ENCODE measurements at regions of chr2 and their contacts with region 1.

Region 1: GRCh38 chr2:230987137-230988020 is 8.5 kb upstream of the SPATA3 start:
- DNase-seq: peak; percentile 78
- H3K4me3 Mint-ChIP-seq: peak overlapping the region; percentile 42
- H3K27ac Mint-ChIP-seq: no peak overlapping the region
- H3K4me1 Mint-ChIP-seq: peaks cover 39% of the 10 kb centered on the region
- H3K27me3 Mint-ChIP-seq: peaks cover 39% of the 10 kb centered on the region

Region 2: DNA sequence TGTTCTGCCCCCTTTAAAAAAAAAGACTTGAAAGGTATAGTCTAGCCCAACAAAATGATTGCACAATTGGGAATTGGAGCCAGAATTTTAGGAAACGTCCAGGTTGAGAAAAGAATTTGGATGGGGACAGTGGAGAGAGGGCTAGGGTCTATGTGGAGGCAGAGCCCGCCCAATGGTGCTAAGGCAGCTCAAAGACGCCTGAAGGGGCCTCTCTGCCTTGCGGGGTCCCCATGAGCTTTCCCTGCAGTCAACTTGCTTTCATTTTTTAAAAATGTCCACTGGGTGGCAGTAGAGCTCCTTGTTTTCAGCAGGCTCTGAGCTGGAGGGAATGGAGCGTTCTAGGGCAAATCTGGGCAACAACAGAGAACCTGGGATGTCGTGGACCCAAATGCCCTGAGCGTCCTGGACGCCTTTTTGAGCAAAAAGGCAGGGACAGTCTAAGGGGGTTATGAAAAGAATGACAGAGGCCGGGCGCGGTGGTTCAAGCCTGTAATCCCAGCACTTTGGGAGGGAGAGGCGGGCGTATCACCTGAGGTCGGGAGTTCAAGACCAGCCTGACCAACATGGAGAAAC is 162.9 kb before region 1 on chr2:
- CTCF ChIA-PET with region 1: interaction called, 51 read pairs
- POLR2A ChIA-PET with region 1: interaction called, 11 read pairs
- DNase-seq: peak; percentile 55
- H3K4me3 Mint-ChIP-seq: peak overlapping the region; percentile 21
- H3K27ac Mint-ChIP-seq: no peak overlapping the region
- H3K4me1 Mint-ChIP-seq: peaks cover 20% of the 10 kb centered on the region
- H3K27me3 Mint-ChIP-seq: peaks cover 33% of the 10 kb centered on the region

Region 3: DNA sequence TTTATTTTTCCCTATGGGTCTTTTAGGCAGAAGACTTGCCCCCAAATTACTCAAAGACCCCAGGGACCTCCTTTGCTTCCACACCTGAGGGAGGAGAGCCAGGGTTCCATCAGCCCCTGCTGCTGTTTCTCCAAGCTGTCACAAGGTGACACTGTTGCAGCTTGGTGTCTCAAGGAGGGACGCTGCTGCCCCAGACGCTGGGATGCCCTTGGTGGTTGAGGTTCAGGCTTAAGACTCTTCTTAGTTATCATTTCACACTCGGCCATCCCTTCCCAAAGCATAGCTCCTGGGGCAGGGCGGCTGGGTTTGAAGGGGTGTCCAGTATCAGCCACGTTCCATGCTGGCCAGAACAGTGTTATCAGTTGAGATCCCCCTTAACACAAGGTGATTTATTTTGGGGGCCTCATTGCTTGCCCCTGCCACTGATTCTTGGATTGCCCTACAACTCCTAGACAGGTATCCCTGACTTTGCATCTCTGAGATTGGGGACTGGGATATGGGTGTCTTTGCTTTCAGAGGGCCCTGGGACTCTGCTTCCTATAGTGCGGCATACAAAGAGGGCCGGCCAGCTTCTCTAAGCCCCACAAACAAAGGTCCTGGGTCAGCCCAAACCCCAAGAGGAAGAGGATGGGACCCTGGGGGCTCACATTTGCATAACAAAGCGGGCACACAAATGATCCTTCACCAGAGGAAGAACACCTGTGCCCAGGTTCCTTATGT is 85.0 kb before region 1 on chr2:
- CTCF ChIA-PET with region 1: interaction called, 230 read pairs
- POLR2A ChIA-PET with region 1: interaction called, 51 read pairs
- DNase-seq: peak; percentile 58
- H3K4me3 Mint-ChIP-seq: no peak overlapping the region
- H3K27ac Mint-ChIP-seq: no peak overlapping the region
- H3K4me1 Mint-ChIP-seq: peaks cover 41% of the 10 kb centered on the region
- H3K27me3 Mint-ChIP-seq: peaks cover 22% of the 10 kb centered on the region

Region 4: DNA sequence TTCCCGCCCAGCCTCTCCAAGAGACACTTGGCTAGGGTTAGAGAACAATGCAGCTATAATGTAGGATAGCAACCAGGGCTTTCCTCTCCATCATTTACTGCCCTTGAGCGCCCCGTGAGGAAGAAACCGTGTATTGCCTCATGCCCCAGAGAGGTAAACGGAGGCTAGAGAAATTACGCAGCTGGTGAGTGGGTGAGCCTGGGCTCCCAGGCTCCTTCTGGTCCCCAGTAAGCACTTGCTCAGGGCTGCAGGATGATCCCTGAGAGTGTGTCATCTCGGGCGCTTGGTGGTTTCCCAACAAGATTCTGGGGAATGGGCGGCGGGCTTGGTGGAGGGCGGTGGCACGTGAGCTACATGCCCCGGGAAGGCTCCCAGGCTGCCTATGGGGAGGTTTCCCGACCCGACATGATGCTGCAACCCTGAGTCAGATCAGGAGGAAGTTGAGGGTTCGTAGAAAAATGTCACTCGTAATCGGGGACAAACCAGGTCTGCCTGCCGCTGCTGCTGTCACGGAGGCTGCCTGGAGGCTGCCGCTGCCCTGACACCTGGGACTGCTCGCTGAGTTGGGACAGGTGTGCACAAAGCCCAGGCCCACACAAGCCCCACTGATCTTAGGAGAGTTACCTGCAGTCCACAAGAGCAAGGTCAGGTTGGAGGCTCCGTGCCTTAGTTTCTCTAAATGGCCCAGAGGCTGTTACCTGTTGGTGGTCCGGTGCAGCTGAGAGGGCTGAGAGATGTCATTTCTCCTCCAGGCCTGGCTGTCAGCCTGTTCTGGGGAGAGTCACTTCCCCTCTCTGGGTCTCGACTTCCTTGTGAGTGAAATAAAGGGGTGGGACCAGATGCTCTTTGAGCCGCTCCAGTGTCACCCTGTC is 62.7 kb before region 1 on chr2 and contains the start of gene GPR55:
- CTCF ChIA-PET with region 1: interaction called, 127 read pairs
- POLR2A ChIA-PET with region 1: interaction called, 69 read pairs
- DNase-seq: peak; percentile 68
- H3K4me3 Mint-ChIP-seq: peak within 1 kb of the TSS; percentile 77
- H3K27ac Mint-ChIP-seq: peak within 1 kb of the TSS; percentile 81
- H3K4me1 Mint-ChIP-seq: peaks cover 60% of the 10 kb centered on the region
- H3K27me3 Mint-ChIP-seq: peaks cover 20% of the 10 kb centered on the region
- total RNA-seq, gene GPR55: 7.3 to 7.4 TPM

Region 5: GRCh38 chr2:230956827-230957755 is 30.3 kb before region 1 on chr2:
- CTCF ChIA-PET with region 1: interaction called, 7 read pairs
- POLR2A ChIA-PET with region 1: interaction called, 14 read pairs
- DNase-seq: peak; percentile 63
- H3K4me3 Mint-ChIP-seq: peak overlapping the region; percentile 85
- H3K27ac Mint-ChIP-seq: peak overlapping the region; percentile 93
- H3K4me1 Mint-ChIP-seq: peaks cover 42% of the 10 kb centered on the region
- H3K27me3 Mint-ChIP-seq: peaks cover 42% of the 10 kb centered on the region

Region 6: GRCh38 chr2:231084565-231084964 is 97.2 kb after region 1 on chr2:
- CTCF ChIA-PET with region 1: no interaction called
- POLR2A ChIA-PET with region 1: no interaction called
- DNase-seq: no peak
- H3K4me3 Mint-ChIP-seq: no peak overlapping the region
- H3K27ac Mint-ChIP-seq: no peak overlapping the region
- H3K4me1 Mint-ChIP-seq: peaks cover 2% of the 10 kb centered on the region
- H3K27me3 Mint-ChIP-seq: no peaks in the 10 kb centered on the region